ENCODE measurements at regions of chr13 and their contacts with region 1.

Region 1: DNA sequence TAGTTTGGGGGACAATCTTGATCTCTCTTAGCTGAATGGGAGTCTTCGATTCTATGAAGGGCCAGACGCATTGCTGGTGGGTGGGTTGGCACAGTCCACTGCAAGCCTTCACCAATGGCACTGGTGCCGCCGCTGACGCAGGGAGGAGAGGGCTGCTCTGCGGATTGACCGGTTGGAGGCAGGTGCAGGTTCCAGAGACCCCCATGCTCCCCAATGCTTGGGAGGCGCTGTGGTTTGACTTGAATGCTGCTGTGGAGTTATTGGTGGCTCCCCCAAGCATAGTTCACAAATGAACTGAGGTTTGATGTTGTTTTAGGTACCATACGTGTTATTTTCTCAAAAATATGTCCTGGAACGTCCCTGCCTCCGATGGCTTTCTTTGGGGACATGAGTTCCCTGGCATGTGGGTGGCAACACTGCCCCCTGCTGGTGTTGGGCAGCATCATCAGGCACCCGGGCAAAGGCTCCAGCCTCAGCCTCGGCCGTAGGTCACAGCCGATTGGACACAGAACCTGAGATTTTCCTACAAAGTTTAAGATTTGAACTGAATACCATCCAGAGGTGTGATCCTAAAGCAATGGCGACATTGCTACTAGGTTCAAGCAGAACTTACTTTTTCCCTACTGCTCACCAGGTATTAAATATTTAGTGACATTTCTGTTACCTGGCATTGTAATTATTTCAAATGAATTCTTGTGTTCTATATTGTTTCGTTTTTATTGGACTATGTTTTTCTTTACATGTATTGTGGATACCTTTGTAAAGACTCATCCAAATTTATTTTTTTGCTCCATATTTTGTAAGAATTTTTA is 95.5 kb downstream of the ANKRD10 start:
- DNase-seq: peak; percentile 91
- CTCF ChIP-seq: peak; percentile 96

Region 2: GRCh38 chr13:110455941-110456340 is 363.5 kb before region 1 on chr13:
- in situ Hi-C with region 1: loop called (anchors 25 kb)
- DNase-seq: peak; percentile 91
- CTCF ChIP-seq: peak; percentile 86

Region 3: GRCh38 chr13:110509971-110510786 is 309.2 kb before region 1 on chr13:
- in situ Hi-C with region 1: no loop called
- DNase-seq: peak; percentile 75
- CTCF ChIP-seq: no peak

Region 4: DNA sequence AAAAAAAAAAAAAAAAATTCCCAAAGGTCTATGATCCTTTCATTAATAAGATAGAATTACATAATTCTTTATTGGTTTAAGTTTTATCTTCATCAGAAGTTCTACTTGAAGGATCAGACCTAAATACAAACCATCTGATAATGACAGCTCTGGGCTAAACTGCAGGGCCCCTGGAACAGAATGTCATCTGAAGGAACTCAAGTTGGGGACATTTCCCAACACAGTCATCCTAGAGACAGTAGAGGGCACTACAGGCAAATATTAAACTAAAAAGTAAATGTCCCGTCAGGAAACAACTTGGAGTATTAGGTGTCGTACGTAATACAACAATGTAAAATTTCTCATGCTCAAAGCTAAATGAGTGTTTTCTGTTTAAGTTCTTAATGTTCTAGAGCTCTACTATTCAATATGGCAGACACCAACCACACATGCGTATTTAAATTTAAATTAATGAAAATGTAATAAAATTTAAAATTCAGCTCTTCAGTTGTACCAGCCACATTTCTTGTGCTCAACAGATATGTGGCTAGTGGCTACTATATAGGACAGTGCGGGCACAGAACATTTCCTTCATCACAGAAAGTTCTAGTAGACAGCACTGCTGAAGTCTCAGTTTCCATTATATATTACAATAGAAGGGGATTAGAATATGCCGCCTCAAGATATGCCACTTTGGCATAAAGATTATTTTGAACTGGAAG is 225.8 kb before region 1 on chr13:
- in situ Hi-C with region 1: loop called (anchors 25 kb)
- DNase-seq: peak; percentile 81
- CTCF ChIP-seq: peak; percentile 56

Measured in GM13976 (cell line).